MCF 10A (cell line): ENCODE measurements at regions of chr1 and their contacts with region 1.

Region 1: GRCh38 chr1:225627304-225627947 is 25.5 kb downstream of the ENAH start:
- DNase-seq: no peak
- H3K4me3 Mint-ChIP-seq: no peak overlapping the region
- H3K27ac Mint-ChIP-seq: peak overlapping the region; percentile 47
- H3K4me1 Mint-ChIP-seq: peaks cover 31% of the 10 kb centered on the region
- H3K27me3 Mint-ChIP-seq: no peaks in the 10 kb centered on the region
- CTCF ChIP-seq: no peak

Region 2: DNA sequence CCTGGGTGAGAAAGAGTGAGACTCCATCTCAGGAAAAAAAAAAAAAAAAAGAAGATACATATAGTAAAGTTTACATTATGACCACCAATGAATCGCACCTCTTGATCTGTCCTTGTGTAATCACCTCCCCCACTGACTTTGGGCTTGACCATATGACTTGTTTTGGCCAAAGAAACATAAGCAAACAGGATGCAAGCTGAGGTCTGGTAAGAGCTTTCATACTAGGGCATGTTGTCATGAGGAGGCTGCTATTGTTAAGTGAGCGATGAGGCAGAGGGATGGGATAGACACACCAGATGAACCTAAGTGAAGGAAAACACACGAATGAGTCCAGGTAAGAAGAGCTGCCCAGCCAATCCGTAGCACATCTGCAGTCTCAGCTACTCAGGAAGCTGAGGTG is 14.8 kb after region 1 on chr1:
- CTCF ChIA-PET with region 1: interaction called, 12 read pairs
- POLR2A ChIA-PET with region 1: interaction called, 42 read pairs
- intact Hi-C with region 1: no loop called
- DNase-seq: no peak
- H3K4me3 Mint-ChIP-seq: no peak overlapping the region
- H3K27ac Mint-ChIP-seq: no peak overlapping the region
- H3K4me1 Mint-ChIP-seq: peaks cover 17% of the 10 kb centered on the region
- H3K27me3 Mint-ChIP-seq: no peaks in the 10 kb centered on the region
- CTCF ChIP-seq: no peak

Region 3: GRCh38 chr1:225685476-225686176 is 58.2 kb after region 1 on chr1:
- CTCF ChIA-PET with region 1: no interaction called
- POLR2A ChIA-PET with region 1: no interaction called
- intact Hi-C with region 1: loop called (anchors 1 kb)
- DNase-seq: no peak
- H3K4me3 Mint-ChIP-seq: no peak overlapping the region
- H3K27ac Mint-ChIP-seq: no peak overlapping the region
- H3K4me1 Mint-ChIP-seq: peaks cover 10% of the 10 kb centered on the region
- H3K27me3 Mint-ChIP-seq: no peaks in the 10 kb centered on the region
- CTCF ChIP-seq: no peak

Region 4: GRCh38 chr1:225731491-225731890 is 104.1 kb after region 1 on chr1:
- CTCF ChIA-PET with region 1: no interaction called
- POLR2A ChIA-PET with region 1: no interaction called
- intact Hi-C with region 1: no loop called
- DNase-seq: no peak
- H3K4me3 Mint-ChIP-seq: no peak overlapping the region
- H3K27ac Mint-ChIP-seq: no peak overlapping the region
- H3K4me1 Mint-ChIP-seq: peaks cover 15% of the 10 kb centered on the region
- H3K27me3 Mint-ChIP-seq: no peaks in the 10 kb centered on the region
- CTCF ChIP-seq: no peak